K562 (cell line): ENCODE measurements at regions of chr19 and their contacts with region 1.

Region 1: GRCh38 chr19:34336781-34337271 is 28.2 kb upstream of the GPI start:
- DNase-seq: peak in 3 of 4 experiments; percentile 42 to 44 (median 44)
- ATAC-seq: peak; percentile 43; the same call in 2 of the 3 replicates
- H3K4me3 ChIP-seq: no peak overlapping the region
- H3K27ac ChIP-seq: no peak overlapping the region
- H3K4me1 ChIP-seq: no peaks in the 10 kb centered on the region
- H3K27me3 ChIP-seq: no peaks in the 10 kb centered on the region
- CTCF ChIP-seq: peak; percentile 59 to 65 (median 60); a peak in 5 of 6 replicates
- EP300 ChIP-seq: no peak
- POLR2A ChIP-seq: no peak
- RAD21 ChIP-seq: peak; percentile 29 to 58; a peak in 3 of 4 replicates

Region 2: GRCh38 chr19:34241513-34242337 is 95.1 kb before region 1 on chr19:
- CTCF ChIA-PET with region 1: interaction called, 6 read pairs
- POLR2A ChIA-PET with region 1: no interaction called
- in situ Hi-C with region 1: no loop called
- intact Hi-C with region 1: loop called (anchors 5 kb)
- DNase-seq: peak in 2 of 4 experiments; percentile 60 to 69
- ATAC-seq: peak; percentile 96
- H3K4me3 ChIP-seq: no peak overlapping the region
- H3K27ac ChIP-seq: no peak overlapping the region
- H3K4me1 ChIP-seq: peaks cover 5 to 14% of the 10 kb centered on the region in 2 experiments; a peak in 3 of 5 replicates
- H3K27me3 ChIP-seq: no peaks in the 10 kb centered on the region
- CTCF ChIP-seq: peak; percentile 66 to 82 (median 74)
- EP300 ChIP-seq: no peak
- POLR2A ChIP-seq: no peak
- RAD21 ChIP-seq: peak in 1 of 2 experiments; percentile 53; a peak in 2 of 4 replicates

Region 3: GRCh38 chr19:34260771-34261173 is 76.1 kb before region 1 on chr19:
- CTCF ChIA-PET with region 1: no interaction called
- POLR2A ChIA-PET with region 1: no interaction called
- in situ Hi-C with region 1: no loop called
- intact Hi-C with region 1: no loop called
- DNase-seq: peak in 2 of 4 experiments; percentile 25 to 30
- ATAC-seq: peak; percentile 70
- H3K4me3 ChIP-seq: no peak overlapping the region
- H3K27ac ChIP-seq: no peak overlapping the region
- H3K4me1 ChIP-seq: peaks cover 5 to 6% of the 10 kb centered on the region in 2 experiments; a peak in 3 of 5 replicates
- H3K27me3 ChIP-seq: no peaks in the 10 kb centered on the region
- CTCF ChIP-seq: no peak
- EP300 ChIP-seq: no peak
- POLR2A ChIP-seq: no peak
- RAD21 ChIP-seq: no peak